ENCODE measurements at regions of chr16 and their contacts with region 1.

Region 1: DNA sequence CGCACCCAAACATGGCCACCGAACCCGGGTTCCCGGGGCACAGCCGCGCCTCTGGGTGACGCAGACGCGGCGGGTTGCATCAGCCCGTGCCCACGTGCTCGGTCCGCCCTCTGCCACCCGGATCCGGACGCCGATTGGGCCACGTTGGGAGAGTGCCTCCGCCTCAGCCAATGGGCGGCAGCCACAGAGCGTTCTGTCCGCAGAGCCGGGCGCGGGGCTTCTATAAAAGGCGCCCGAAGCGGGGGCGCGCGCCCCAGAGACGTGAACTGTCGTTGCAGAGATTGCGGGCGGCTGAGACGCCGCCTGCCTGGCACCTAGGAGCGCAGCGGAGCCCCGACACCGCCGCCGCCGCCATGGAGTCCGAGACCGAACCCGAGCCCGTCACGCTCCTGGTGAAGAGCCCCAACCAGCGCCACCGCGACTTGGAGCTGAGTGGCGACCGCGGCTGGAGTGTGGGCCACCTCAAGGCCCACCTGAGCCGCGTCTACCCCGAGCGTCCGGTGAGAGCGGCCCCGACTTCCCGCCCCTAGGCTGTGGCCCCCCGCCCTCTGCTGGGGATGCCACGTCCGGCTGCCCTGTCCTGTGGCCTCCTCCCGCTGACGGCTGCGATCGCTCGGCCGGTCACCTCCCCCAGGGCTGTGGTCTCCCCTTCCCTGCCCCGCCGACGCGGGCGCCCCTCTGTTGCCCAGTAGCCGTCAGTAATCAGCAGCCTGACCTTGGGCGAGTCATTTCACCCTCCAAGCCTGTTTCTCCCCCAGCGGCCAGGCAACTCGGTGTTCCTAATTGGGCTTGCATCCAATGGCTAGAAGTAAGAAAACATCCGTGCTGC is at the start of gene HERPUD1:
- DNase-seq: peak; percentile 99
- ATAC-seq: peak; percentile 91
- H3K4me3 Mint-ChIP-seq: peak within 1 kb of the TSS; percentile 98
- H3K27ac Mint-ChIP-seq: peak within 1 kb of the TSS; percentile 98
- H3K4me1 Mint-ChIP-seq: peaks cover 35% of the 10 kb centered on the region
- H3K27me3 Mint-ChIP-seq: no peaks in the 10 kb centered on the region
- CTCF ChIP-seq: no peak
- total RNA-seq, gene HERPUD1: 142 to 150 TPM

Region 2: GRCh38 chr16:56911771-56912571 is 20.1 kb before region 1 on chr16:
- CTCF ChIA-PET with region 1: interaction called, 5 read pairs
- POLR2A ChIA-PET with region 1: interaction called, 33 read pairs
- intact Hi-C with region 1: no loop called
- DNase-seq: no peak
- ATAC-seq: no peak
- H3K4me3 Mint-ChIP-seq: no peak overlapping the region
- H3K27ac Mint-ChIP-seq: no peak overlapping the region
- H3K4me1 Mint-ChIP-seq: peaks cover 34% of the 10 kb centered on the region
- H3K27me3 Mint-ChIP-seq: no peaks in the 10 kb centered on the region
- CTCF ChIP-seq: no peak

Region 3: GRCh38 chr16:56919099-56919800 is 12.9 kb before region 1 on chr16:
- CTCF ChIA-PET with region 1: interaction called, 5 read pairs
- POLR2A ChIA-PET with region 1: interaction called, 68 read pairs
- intact Hi-C with region 1: no loop called
- DNase-seq: no peak
- ATAC-seq: peak; percentile 56
- H3K4me3 Mint-ChIP-seq: no peak overlapping the region
- H3K27ac Mint-ChIP-seq: no peak overlapping the region
- H3K4me1 Mint-ChIP-seq: peaks cover 20% of the 10 kb centered on the region
- H3K27me3 Mint-ChIP-seq: no peaks in the 10 kb centered on the region
- CTCF ChIP-seq: no peak

Region 4: GRCh38 chr16:56944954-56945839 is 13.1 kb after region 1 on chr16:
- CTCF ChIA-PET with region 1: interaction called, 19 read pairs
- POLR2A ChIA-PET with region 1: interaction called, 145 read pairs
- intact Hi-C with region 1: no loop called
- DNase-seq: peak; percentile 66
- ATAC-seq: peak; percentile 78
- H3K4me3 Mint-ChIP-seq: peak overlapping the region; percentile 21
- H3K27ac Mint-ChIP-seq: peak overlapping the region; percentile 89
- H3K4me1 Mint-ChIP-seq: peaks cover 54% of the 10 kb centered on the region
- H3K27me3 Mint-ChIP-seq: no peaks in the 10 kb centered on the region
- CTCF ChIP-seq: no peak

Region 5: DNA sequence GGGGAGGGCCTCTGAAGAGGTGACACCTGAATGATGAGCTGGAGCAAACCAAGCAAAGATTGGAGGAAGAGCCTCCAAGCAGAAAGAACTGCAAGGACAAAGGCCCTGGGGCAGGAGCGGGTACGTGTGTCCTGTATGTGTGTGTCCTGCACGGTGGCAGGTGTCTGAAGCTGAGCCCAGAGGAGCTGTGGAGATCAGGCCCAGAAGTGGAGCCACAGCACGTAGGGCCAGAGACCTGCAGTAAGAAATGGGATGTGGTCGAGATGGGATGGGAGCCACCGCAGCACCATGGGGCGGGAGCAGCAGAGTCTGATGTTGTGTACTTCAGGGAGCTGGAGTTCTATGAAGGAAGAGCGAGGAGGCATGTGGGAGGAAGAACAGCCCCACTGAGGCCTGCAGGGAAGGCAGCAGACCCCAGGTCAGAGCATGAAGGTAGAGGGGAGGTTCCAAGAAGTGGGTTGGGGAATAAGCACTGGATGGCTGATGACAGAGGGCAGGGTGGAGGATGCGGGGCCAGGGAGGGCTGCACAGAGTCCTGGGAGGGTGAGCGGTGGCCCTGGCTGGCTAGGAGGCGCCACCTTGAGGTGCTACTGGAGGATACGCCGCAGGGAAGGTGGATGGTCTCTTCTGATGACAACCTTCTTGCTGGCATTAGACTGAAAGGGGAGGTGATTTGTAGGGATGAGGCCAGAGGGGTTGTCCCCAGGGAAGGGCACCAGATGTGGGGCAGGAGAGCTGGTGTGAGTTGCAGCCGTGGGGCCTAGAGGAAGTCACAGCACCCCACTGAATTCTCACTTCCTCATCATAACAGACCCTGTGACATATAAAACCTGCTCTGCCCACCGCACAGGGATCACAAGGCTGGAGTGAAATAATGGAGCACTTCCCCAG is 19.0 kb after region 1 on chr16:
- CTCF ChIA-PET with region 1: interaction called, 19 read pairs
- POLR2A ChIA-PET with region 1: interaction called, 145 read pairs
- intact Hi-C with region 1: no loop called
- DNase-seq: peak; percentile 82
- ATAC-seq: peak; percentile 95
- H3K4me3 Mint-ChIP-seq: no peak overlapping the region
- H3K27ac Mint-ChIP-seq: peak overlapping the region; percentile 10
- H3K4me1 Mint-ChIP-seq: peaks cover 19% of the 10 kb centered on the region
- H3K27me3 Mint-ChIP-seq: no peaks in the 10 kb centered on the region
- CTCF ChIP-seq: peak; percentile 80